A673 (cell line): ENCODE measurements at regions of chr11 and their contacts with region 1.

Region 1: DNA sequence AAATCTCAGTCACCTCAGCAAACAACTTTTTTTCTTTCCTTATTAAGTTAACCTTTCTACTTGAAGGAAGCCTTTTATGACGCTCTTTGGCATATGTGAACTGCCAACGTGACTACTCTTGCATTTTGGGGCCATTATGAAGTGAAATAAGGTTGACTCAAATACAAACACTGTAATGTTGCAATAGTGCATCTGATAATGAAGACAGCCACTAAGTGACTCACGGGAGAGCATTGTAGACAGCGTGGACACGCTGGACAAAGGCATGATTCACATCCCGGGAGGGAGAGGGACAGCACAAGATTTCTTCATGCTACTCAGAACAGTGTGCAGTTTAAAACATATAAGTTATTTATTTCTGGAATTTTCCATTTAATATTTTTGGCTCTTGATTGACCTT is 560.8 kb downstream of the ETS1 start:
- DNase-seq: no peak
- H3K4me3 ChIP-seq: no peak overlapping the region
- H3K27ac ChIP-seq: no peak overlapping the region
- H3K4me1 ChIP-seq: no peaks in the 10 kb centered on the region
- H3K27me3 ChIP-seq: peaks cover 70% of the 10 kb centered on the region
- CTCF ChIP-seq: no peak

Region 2: GRCh38 chr11:127420139-127420538 is 606.5 kb before region 1 on chr11:
- CTCF ChIA-PET with region 1: no interaction called
- POLR2A ChIA-PET with region 1: no interaction called
- intact Hi-C with region 1: no loop called
- DNase-seq: no peak
- H3K4me3 ChIP-seq: no peak overlapping the region
- H3K27ac ChIP-seq: no peak overlapping the region
- H3K4me1 ChIP-seq: no peaks in the 10 kb centered on the region
- H3K27me3 ChIP-seq: no peaks in the 10 kb centered on the region
- CTCF ChIP-seq: no peak

Region 3: GRCh38 chr11:127564810-127565209 is 461.8 kb before region 1 on chr11:
- CTCF ChIA-PET with region 1: no interaction called
- POLR2A ChIA-PET with region 1: no interaction called
- intact Hi-C with region 1: no loop called
- DNase-seq: no peak
- H3K4me3 ChIP-seq: no peak overlapping the region
- H3K27ac ChIP-seq: no peak overlapping the region
- H3K4me1 ChIP-seq: no peaks in the 10 kb centered on the region
- H3K27me3 ChIP-seq: peaks cover 22% of the 10 kb centered on the region
- CTCF ChIP-seq: no peak

Region 4: GRCh38 chr11:128290106-128290840 is 263.7 kb after region 1 on chr11:
- CTCF ChIA-PET with region 1: no interaction called
- POLR2A ChIA-PET with region 1: no interaction called
- intact Hi-C with region 1: loop called (anchors 2 kb)
- DNase-seq: peak; percentile 65
- H3K4me3 ChIP-seq: no peak overlapping the region
- H3K27ac ChIP-seq: no peak overlapping the region
- H3K4me1 ChIP-seq: no peaks in the 10 kb centered on the region
- H3K27me3 ChIP-seq: peaks cover 76% of the 10 kb centered on the region
- CTCF ChIP-seq: peak; percentile 89